Heart left ventricle (tissue), 16 donors: ENCODE measurements at regions of chr20 and their contacts with region 1.

Region 1: GRCh38 chr20:22453239-22454080 is 130.9 kb downstream of the FOXA2 start:
- DNase-seq: no peak
- ATAC-seq: no peak
- H3K4me3 ChIP-seq: no peak overlapping the region
- H3K27ac ChIP-seq: no peak overlapping the region
- H3K4me1 ChIP-seq: no peaks in the 10 kb centered on the region
- H3K27me3 ChIP-seq: peaks cover 0 to 56% (median 9%) of the 10 kb centered on the region in 9 donors
- CTCF ChIP-seq: peak; percentile 30 to 69 (median 50)
- POLR2A ChIP-seq: no peak

Region 2: GRCh38 chr20:21739682-21740081 is 713.8 kb before region 1 on chr20:
- intact Hi-C with region 1: no loop called
- DNase-seq: no peak
- ATAC-seq: no peak
- H3K4me3 ChIP-seq: no peak overlapping the region
- H3K27ac ChIP-seq: no peak overlapping the region
- H3K4me1 ChIP-seq: no peaks in the 10 kb centered on the region
- H3K27me3 ChIP-seq: peaks cover 0 to 6% (median 0%) of the 10 kb centered on the region in 9 donors
- CTCF ChIP-seq: no peak
- POLR2A ChIP-seq: no peak

Region 3: DNA sequence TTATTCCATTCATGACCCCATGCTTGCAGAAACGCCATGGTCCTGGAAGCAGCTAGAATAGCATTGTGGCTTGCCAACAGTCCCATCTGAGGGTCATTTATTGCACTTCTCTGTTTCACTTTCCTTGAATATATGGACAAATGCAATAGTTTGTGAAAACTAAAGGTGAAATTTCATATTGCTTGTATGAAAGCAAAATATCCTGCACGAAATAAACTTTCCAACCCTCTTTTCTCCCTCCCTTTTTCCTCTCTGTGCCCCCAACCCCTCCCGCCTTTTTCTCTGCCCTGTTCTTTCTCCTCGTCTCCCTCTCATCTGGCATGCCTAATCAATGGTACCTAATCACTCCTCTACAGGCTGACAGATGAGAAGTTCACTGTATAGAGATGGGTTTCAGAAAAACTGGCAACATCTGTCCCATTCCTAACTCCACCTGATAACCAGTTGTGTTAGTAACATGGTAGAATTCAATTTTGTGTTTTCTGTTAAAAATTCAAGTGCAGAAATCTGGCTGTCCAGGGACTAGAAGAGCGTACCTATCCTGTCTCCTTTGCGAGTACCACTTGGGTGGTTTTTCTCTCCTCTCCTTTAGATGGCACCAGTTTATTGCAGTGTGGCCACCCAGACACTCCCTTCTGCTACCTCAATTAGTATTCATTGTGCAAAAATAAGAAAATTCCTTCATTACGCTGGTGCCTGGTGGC is 67.7 kb before region 1 on chr20:
- intact Hi-C with region 1: loop called in 1 of 10 experiments (anchors 10 kb)
- DNase-seq: no peak
- ATAC-seq: no peak
- H3K4me3 ChIP-seq: no peak overlapping the region
- H3K27ac ChIP-seq: no peak overlapping the region
- H3K4me1 ChIP-seq: no peaks in the 10 kb centered on the region
- H3K27me3 ChIP-seq: peaks cover 0 to 41% (median 0%) of the 10 kb centered on the region in 9 donors
- CTCF ChIP-seq: peak in 1 of 12 donors; percentile 24
- POLR2A ChIP-seq: no peak

Region 4: GRCh38 chr20:22675341-22675740 is 221.9 kb after region 1 on chr20:
- intact Hi-C with region 1: loop called in 5 of 10 experiments (anchors 5 to 10 kb)
- DNase-seq: no peak
- ATAC-seq: no peak
- H3K4me3 ChIP-seq: no peak overlapping the region
- H3K27ac ChIP-seq: no peak overlapping the region
- H3K4me1 ChIP-seq: no peaks in the 10 kb centered on the region
- H3K27me3 ChIP-seq: peaks cover 0 to 47% (median 6%) of the 10 kb centered on the region in 9 donors
- CTCF ChIP-seq: no peak
- POLR2A ChIP-seq: no peak

Region 5: DNA sequence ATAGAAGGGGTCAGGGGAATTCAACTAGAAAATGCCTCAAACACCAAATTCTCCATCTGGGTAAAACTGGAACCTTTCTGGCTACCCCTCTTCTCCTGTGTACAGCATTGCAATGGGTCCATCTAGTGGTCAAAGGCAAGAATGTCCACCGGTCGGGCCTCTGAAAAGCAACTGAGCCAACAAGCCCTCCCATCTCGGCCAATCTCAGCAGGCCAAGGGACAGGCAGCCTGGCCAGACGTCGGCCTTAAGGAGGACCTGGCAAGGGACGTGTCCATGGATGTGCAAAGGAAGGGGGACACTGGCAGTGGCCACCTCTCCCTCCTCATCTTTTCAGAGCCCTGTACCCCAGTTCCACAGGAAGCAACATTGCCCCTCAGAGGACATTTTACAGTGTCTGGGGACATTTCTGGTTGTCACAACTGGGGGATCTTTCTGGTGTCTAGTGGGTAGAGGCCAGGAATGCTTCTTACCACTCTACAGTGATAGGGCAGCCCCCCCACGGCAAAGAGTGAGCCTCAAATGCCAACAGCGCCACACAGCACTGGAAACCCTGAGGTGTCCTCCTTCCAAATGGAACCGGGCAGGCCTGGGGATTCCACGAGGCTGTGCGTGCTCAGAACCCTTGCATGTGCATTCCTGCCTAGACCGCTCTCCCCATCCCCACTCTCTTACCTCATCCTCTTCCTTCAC is 230.8 kb after region 1 on chr20:
- intact Hi-C with region 1: loop called in 6 of 10 experiments (anchors 2 to 10 kb)
- DNase-seq: peak; percentile 54 to 71 (median 62)
- ATAC-seq: peak; percentile 57 to 85 (median 82)
- H3K4me3 ChIP-seq: no peak overlapping the region
- H3K27ac ChIP-seq: no peak overlapping the region
- H3K4me1 ChIP-seq: peaks cover 0 to 19% (median 4%) of the 10 kb centered on the region in 12 donors
- H3K27me3 ChIP-seq: peaks cover 0 to 11% (median 0%) of the 10 kb centered on the region in 9 donors
- CTCF ChIP-seq: peak; percentile 77 to 91 (median 85)
- POLR2A ChIP-seq: no peak

Region 6: GRCh38 chr20:23340524-23340923 is 887.1 kb after region 1 on chr20:
- intact Hi-C with region 1: loop called in 2 of 10 experiments (anchors 5 to 10 kb)
- DNase-seq: peak; percentile 60 to 74 (median 72)
- ATAC-seq: peak in 3 of 4 donors; percentile 84 to 89 (median 87)
- H3K4me3 ChIP-seq: no peak overlapping the region
- H3K27ac ChIP-seq: no peak overlapping the region
- H3K4me1 ChIP-seq: peaks cover 0 to 5% (median 1%) of the 10 kb centered on the region in 12 donors
- H3K27me3 ChIP-seq: no peaks in the 10 kb centered on the region
- CTCF ChIP-seq: peak; percentile 52 to 86 (median 77)
- POLR2A ChIP-seq: no peak